Calu3 (cell line): ENCODE measurements at regions of chr7 and their contacts with region 1.

Region 1: DNA sequence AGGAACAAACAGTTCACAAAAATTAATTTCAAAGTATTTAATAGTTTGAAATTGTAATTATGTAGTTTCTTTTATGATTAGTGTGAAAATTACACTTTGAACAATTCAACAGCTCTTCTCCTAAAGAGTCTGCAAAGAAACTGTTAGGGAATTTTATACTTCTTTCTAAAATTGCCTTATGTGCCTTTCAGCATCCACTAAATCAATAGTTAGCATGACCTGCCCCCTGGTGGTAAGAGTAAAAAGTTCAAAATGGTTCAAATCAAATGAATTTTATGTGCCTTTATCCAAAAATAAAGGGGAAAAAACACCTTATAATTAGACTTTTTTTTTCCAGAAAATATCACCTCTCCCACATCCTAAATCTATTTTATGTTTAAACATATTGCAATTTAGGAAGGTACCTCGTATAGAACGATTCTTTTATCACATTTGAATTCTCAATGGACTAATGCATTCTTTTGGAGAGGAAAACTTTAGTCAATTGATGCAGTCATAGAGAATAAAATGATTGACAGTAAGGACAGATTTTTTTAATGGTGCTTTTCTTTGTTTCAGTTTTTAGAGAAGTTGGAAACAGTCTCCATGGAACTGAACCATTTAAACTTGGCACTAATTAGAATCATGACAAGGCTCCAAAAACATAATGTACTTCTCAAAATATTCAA is 163.7 kb downstream of the SEMA3D start:
- DNase-seq: peak; percentile 55
- H3K4me3 Mint-ChIP-seq: no peak overlapping the region
- H3K27ac Mint-ChIP-seq: no peak overlapping the region
- H3K4me1 Mint-ChIP-seq: no peaks in the 10 kb centered on the region
- H3K27me3 Mint-ChIP-seq: no peaks in the 10 kb centered on the region
- CTCF ChIP-seq: no peak

Region 2: GRCh38 chr7:83936056-83936708 is 1087.0 kb before region 1 on chr7:
- CTCF ChIA-PET with region 1: interaction called, 3 read pairs
- intact Hi-C with region 1: loop called (anchors 1 kb)
- DNase-seq: peak; percentile 56
- H3K4me3 Mint-ChIP-seq: no peak overlapping the region
- H3K27ac Mint-ChIP-seq: no peak overlapping the region
- H3K4me1 Mint-ChIP-seq: peaks cover 6% of the 10 kb centered on the region
- H3K27me3 Mint-ChIP-seq: no peaks in the 10 kb centered on the region
- CTCF ChIP-seq: peak; percentile 57

Region 3: DNA sequence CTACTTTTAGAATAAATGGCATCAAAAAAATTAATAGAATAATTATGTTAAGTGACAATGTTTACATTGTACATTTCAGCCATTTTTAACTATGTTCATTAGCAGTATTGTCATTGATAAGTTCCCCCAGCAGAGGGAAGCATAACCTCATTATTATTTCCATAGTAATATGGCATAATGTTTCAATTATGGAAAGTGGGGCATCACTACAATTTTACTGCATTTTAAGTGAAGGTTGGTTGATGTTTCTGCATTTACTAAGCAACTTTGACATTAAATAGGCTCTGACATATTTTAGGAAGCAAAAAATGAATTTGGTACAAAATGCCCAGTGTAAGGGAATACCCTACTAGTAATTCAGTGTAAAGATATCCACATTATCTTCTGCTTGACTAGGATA is 1046.9 kb before region 1 on chr7:
- CTCF ChIA-PET with region 1: no interaction called
- intact Hi-C with region 1: loop called (anchors 1 kb)
- DNase-seq: peak; percentile 1
- H3K4me3 Mint-ChIP-seq: no peak overlapping the region
- H3K27ac Mint-ChIP-seq: no peak overlapping the region
- H3K4me1 Mint-ChIP-seq: no peaks in the 10 kb centered on the region
- H3K27me3 Mint-ChIP-seq: no peaks in the 10 kb centered on the region
- CTCF ChIP-seq: peak; percentile 41

Region 4: GRCh38 chr7:84194543-84195271 is 828.5 kb before region 1 on chr7 and contains the start of gene SEMA3A:
- CTCF ChIA-PET with region 1: no interaction called
- intact Hi-C with region 1: loop called (anchors 5 kb)
- DNase-seq: peak; percentile 35
- H3K4me3 Mint-ChIP-seq: peak within 1 kb of the TSS; percentile 85
- H3K27ac Mint-ChIP-seq: peak within 1 kb of the TSS; percentile 87
- H3K4me1 Mint-ChIP-seq: peaks cover 20% of the 10 kb centered on the region
- H3K27me3 Mint-ChIP-seq: no peaks in the 10 kb centered on the region
- CTCF ChIP-seq: no peak
- total RNA-seq, gene SEMA3A: 20.2 and 24.3 TPM in 2 replicates

Region 5: DNA sequence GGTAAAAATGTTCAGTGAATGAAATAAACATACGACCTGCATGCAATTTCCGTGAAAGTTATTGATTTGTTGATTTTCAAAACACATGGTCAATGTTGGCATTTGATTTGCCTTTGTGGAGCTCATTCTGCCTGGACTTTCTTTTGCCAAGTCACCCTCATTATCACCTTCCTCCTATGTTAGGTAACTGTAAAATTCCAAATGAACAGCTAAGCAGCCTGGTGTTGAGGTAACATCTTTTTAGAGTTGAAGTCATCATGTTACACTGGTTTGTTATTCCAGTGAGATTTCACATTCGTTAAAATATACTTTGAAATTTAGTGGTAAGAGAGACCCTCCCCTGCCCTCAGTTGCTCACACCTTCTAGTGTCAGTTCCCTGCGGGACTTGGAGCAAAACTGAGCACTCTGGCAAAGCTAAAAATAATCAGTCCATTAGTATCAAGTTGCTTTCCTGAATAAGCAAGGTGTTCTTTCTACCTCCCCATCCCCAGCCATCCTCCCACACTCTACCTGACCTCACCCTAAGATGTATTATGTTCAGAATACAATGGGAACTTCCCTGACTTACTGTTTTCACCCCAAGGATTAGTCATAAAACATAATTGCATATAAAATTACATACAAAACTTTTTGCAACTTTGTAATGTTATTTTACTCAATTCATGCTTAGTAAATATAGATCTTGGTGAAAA is 545.2 kb before region 1 on chr7:
- CTCF ChIA-PET with region 1: no interaction called
- intact Hi-C with region 1: loop called (anchors 10 kb)
- DNase-seq: no peak
- H3K4me3 Mint-ChIP-seq: no peak overlapping the region
- H3K27ac Mint-ChIP-seq: no peak overlapping the region
- H3K4me1 Mint-ChIP-seq: no peaks in the 10 kb centered on the region
- H3K27me3 Mint-ChIP-seq: no peaks in the 10 kb centered on the region
- CTCF ChIP-seq: no peak

Region 6: DNA sequence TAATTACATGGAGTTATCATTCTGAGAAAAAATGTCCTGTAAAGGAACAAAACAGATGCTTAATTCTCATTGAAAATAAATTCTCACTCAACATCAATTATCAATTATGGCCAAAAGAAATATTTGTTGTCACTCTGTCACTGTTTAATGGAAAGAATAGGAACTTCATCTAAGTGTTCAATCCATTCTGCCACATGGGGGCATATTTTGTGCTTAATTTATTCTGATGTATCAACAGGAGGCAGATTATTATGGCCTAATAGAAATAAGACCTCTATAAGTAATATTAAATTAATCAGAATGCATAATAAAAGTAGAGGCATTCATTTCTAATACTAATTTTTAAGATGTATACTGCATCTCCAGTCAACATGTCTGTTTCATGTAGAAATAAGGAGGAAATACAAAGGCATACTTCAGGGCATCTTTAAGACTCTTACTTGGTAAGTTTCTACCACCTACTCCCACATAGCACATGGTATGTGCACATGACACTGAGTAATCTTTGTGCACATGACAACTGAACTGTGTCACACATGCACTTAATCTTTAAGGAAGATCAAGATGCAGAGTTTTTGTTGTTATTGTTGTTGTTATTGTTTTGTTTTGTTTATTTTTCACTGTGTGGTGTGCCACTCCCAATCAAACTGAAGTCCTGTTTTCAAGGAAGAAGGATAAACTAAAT is 408.2 kb before region 1 on chr7:
- CTCF ChIA-PET with region 1: no interaction called
- intact Hi-C with region 1: loop called (anchors 5 kb)
- DNase-seq: no peak
- H3K4me3 Mint-ChIP-seq: no peak overlapping the region
- H3K27ac Mint-ChIP-seq: no peak overlapping the region
- H3K4me1 Mint-ChIP-seq: no peaks in the 10 kb centered on the region
- H3K27me3 Mint-ChIP-seq: no peaks in the 10 kb centered on the region
- CTCF ChIP-seq: no peak

Region 7: GRCh38 chr7:85324145-85324799 is 301.1 kb after region 1 on chr7:
- CTCF ChIA-PET with region 1: no interaction called
- intact Hi-C with region 1: no loop called
- DNase-seq: no peak
- H3K4me3 Mint-ChIP-seq: no peak overlapping the region
- H3K27ac Mint-ChIP-seq: no peak overlapping the region
- H3K4me1 Mint-ChIP-seq: no peaks in the 10 kb centered on the region
- H3K27me3 Mint-ChIP-seq: no peaks in the 10 kb centered on the region
- CTCF ChIP-seq: no peak